Activated B cell treated with CpG ODN at 0.5 μM for 24 hours (primary cell): ENCODE measurements at regions of chr10 and their contacts with region 1.

Region 1: DNA sequence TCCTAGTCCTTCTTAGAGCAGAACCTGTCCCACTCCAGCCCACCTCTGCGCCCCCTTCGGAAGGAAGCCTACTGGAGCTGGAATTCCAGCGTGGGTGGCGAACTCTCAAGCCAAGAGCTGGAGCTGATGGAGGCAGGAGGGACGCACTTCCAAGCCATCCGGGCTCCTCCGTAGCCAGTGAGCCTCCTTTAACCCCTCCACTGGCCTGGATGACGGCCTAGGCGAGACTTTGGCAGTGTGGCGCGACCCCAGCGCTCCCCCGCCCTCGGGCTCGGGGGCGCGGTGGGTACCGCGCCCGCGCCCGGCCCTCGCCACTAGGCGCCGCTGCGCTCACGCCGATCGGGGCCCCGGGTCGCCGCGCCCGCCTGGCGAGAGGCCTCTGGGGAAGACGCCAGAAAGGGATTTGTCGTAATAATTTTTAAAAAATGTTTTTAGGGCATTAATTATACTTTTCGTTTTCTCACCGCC is 5.1 kb upstream of the EMX2 start:
- DNase-seq: no peak
- ATAC-seq: no peak
- H3K4me3 Mint-ChIP-seq: no peak overlapping the region
- H3K27ac Mint-ChIP-seq: no peak overlapping the region
- H3K4me1 Mint-ChIP-seq: peaks cover 6% of the 10 kb centered on the region
- H3K27me3 Mint-ChIP-seq: peaks cover 51% of the 10 kb centered on the region
- CTCF ChIP-seq: no peak

Region 2: DNA sequence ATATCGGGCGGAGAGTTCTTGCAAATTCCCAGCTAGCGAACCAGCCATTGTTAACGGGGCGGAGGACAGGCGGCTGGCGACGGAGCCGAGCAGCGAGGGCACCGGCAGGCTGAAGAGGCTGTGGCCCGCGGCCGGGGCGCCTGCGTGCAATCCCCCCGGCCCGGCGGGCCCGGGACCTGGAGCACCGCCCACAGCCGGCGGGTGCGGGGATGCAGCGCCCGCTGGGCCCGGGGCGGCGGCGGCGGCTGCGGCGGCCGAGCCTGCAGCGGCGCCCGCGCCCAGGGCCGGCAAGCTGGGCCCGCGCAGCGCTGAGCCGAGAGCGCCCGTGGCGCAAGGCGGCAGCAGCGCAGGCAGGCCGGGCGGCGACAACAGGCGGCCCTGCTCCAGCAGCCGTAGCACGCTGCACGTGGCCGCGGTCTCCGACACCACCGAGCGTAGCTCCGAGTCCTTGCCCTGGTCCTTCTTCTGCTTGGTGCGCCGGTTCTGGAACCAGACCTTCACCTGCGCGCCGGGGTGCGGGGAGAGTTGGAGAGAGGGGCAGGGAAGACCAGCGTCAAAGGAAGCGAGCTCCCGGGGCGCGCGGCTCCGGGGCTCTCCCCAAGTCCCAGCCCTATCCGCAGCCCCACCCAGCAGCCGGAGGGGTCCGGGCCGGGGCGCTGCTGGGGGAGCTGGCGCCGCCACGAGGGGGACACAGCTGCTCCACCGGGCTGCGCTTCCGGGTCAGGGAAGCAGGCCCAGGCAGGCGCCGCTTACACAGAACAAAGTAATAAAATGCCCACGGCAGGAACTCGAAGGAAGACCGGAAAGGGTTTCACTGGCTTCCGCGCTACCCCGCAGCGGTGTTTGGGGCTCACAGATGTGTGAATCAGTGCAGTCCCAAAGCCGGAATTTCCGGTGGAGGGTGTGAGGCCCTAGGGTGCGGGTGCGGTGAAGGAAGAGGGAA is 403.1 kb before region 1 on chr10:
- CTCF ChIA-PET with region 1: no interaction called
- POLR2A ChIA-PET with region 1: no interaction called
- intact Hi-C with region 1: loop called (anchors 5 kb)
- DNase-seq: no peak
- ATAC-seq: no peak
- H3K4me3 Mint-ChIP-seq: no peak overlapping the region
- H3K27ac Mint-ChIP-seq: no peak overlapping the region
- H3K4me1 Mint-ChIP-seq: peaks cover 20% of the 10 kb centered on the region
- H3K27me3 Mint-ChIP-seq: peaks cover 71% of the 10 kb centered on the region
- CTCF ChIP-seq: no peak

Region 3: GRCh38 chr10:117631276-117632145 is 94.0 kb after region 1 on chr10:
- CTCF ChIA-PET with region 1: no interaction called
- POLR2A ChIA-PET with region 1: no interaction called
- intact Hi-C with region 1: no loop called
- DNase-seq: no peak
- ATAC-seq: no peak
- H3K4me3 Mint-ChIP-seq: no peak overlapping the region
- H3K27ac Mint-ChIP-seq: no peak overlapping the region
- H3K4me1 Mint-ChIP-seq: no peaks in the 10 kb centered on the region
- H3K27me3 Mint-ChIP-seq: peaks cover 7% of the 10 kb centered on the region
- CTCF ChIP-seq: no peak

Region 4: DNA sequence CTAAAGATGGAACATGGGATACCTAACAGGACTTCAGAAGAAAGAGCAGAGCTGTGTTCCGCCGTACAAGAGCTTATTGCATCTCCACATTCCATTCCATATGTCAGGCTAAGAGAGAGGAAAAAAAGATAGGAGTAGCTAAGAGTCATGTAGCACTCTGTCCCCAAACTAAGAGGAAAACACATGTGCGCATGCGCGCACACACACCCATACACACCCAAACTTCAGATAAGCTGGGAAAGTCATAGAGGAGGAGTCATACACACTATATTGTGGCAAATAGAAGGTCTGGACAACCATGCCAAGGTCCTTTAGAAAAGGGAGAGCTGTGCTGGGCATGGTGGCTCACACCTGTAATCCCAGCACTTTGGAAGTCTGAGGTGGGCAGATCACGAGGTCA is 376.9 kb after region 1 on chr10:
- CTCF ChIA-PET with region 1: no interaction called
- POLR2A ChIA-PET with region 1: no interaction called
- intact Hi-C with region 1: no loop called
- DNase-seq: no peak
- ATAC-seq: no peak
- H3K4me3 Mint-ChIP-seq: no peak overlapping the region
- H3K27ac Mint-ChIP-seq: no peak overlapping the region
- H3K4me1 Mint-ChIP-seq: no peaks in the 10 kb centered on the region
- H3K27me3 Mint-ChIP-seq: peaks cover 20% of the 10 kb centered on the region
- CTCF ChIP-seq: no peak